HEK293 (cell line): ENCODE measurements at regions of chr19 and their contacts with region 1.

Region 1: DNA sequence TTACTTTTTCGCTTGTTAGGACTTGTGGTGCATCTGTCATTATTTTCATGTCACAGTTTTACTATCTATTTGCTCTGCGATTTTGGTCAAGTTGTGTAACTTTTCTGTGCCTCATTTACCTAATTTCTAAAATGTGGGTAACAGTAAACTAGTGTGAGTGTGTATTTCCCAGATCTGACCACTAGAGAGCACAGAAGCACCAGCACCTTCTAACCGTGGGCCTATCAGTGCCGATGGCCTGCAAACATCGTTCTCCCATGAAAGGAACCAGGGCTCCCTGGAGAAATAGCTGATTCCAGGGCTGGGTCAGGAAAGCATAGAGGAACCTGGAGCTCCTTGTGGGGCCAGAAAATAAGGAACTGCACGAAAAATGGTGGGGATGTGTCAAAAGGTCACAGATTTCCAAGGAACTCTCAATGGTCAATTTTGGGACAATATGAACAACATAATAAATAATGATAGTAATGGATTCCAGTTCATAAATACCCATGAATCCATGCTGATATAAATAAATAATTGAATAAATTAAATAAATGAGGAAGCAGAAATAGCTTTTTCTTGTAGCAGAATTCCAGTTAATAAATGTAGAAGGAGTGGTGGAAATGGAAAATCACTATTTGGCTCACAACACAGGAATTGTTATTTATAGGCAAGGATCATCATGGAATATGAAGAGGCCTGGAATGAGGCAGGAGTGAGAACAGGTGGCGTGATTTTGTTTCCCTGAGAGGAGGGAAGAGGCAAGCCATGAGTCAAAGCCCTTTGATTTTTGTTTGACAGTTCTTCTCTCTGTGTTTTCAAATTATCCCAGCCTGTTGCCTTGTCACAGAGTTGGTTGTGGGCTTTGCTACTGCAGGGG is 31.1 kb downstream of the CEACAM8 start:
- H3K4me3 ChIP-seq: no peak overlapping the region
- H3K27ac ChIP-seq: no peak overlapping the region
- H3K4me1 ChIP-seq: no peaks in the 10 kb centered on the region
- CTCF ChIP-seq: peak; percentile 69; the same call in 1 of the 2 replicates

Region 2: DNA sequence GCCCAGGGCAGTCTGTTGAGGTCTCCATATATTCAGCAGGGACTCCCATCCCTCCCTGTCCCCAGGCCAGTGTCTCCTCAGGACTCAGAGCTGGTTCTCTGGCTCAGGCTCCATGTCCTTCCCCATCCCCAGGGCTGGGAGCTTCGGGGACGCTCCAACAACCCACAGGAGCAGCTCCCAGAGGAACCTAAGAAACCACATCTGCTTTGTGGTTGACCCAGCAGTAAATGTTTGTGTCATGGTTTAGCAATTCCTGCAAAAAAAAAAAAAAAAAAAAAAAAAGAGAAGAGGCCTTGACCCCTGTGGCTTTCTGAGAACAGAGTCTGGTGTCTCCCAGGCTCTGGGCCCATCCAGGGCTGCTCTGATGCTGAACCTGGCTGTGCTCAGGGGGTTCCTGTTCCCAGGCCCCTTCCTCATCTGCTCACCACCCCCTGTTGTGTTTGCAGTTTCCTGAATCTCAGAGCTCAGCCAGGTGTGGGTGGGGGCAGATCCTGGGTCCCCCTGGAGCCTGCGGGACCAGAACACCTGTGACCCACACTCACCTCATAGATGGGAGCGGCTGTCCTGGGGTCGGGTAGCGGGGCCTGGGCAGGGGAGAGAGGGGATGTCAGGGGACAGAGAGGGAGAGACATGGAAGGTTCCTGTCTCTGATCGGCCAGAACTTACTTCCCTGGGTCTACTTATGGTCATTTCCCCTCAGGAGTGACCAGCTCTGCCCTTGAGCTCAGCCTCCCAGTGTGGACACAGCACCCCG is 10.1 kb before region 1 on chr19:
- CTCF ChIA-PET with region 1: interaction called, 23 read pairs
- POLR2A ChIA-PET with region 1: no interaction called
- H3K4me3 ChIP-seq: no peak overlapping the region
- H3K27ac ChIP-seq: no peak overlapping the region
- H3K4me1 ChIP-seq: no peaks in the 10 kb centered on the region
- CTCF ChIP-seq: no peak

Region 3: GRCh38 chr19:42577016-42577415 is 13.4 kb after region 1 on chr19:
- CTCF ChIA-PET with region 1: interaction called, 19 read pairs
- POLR2A ChIA-PET with region 1: no interaction called
- H3K4me3 ChIP-seq: no peak overlapping the region
- H3K27ac ChIP-seq: no peak overlapping the region
- H3K4me1 ChIP-seq: no peaks in the 10 kb centered on the region
- CTCF ChIP-seq: no peak